Psoas muscle (tissue), 8 donors: ENCODE measurements at regions of chr7 and their contacts with region 1.

Region 1: GRCh38 chr7:55018361-55019190 is at the start of gene EGFR:
- DNase-seq: peak; percentile 80 to 92
- ATAC-seq: peak; percentile 62 to 77 (median 72)
- H3K4me3 ChIP-seq: peak within 1 kb of the TSS; percentile 90
- H3K27ac ChIP-seq: peak within 1 kb of the TSS; percentile 87
- H3K4me1 ChIP-seq: peaks cover 23% of the 10 kb centered on the region
- H3K27me3 ChIP-seq: no peaks in the 10 kb centered on the region
- CTCF ChIP-seq: no peak
- total RNA-seq, gene EGFR: 14.1 to 39.7 (median 22.1) TPM

Region 2: DNA sequence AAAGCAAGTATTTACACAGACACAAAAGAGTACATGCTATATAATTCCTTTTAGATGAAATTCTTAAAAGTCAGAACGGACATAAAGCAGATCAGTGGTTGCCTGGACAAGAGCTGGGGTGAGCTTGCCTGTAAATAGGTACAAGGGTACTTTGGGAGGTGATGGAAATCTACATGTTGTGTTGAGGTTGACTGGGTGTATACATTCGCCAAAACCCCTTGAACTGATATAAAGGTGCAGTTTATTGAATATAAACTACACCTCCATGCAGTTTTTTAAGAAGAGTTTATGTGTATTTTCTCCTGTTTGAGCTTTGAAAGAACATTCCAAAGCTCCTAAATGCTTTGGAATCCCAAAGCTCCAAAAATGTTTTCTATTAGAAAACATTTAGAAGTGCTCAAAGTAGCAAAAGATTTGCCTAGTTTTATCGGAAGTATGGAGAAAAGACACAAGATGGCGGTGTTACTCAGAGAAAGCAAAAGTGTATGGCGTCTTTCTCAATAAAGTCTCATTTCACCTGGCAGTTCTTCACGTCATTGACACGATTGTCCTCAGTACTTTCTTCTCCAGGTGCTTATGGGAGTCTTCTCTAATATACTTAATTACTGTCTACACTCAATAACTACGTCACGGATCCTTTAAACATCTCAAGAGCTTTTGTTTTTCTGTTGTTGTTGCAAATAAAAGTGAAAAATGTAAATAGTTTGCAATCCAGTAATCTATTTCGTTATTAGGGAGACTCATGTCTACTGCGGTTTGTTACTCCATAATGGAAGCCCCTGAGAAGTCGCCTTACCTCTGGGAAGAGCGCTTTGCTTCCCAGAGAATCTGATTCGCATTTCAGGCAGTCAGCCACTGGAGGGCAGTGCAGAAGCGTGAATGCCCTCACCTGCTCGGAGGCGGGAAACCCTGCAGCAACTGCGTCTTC is 244.8 kb before region 1 on chr7:
- intact Hi-C with region 1: loop called in 1 of 2 experiments (anchors 10 kb)
- DNase-seq: peak; percentile 78 to 89
- ATAC-seq: peak; percentile 93 to 99 (median 97)
- H3K4me3 ChIP-seq: peak overlapping the region; percentile 62
- H3K27ac ChIP-seq: no peak overlapping the region
- H3K4me1 ChIP-seq: no peaks in the 10 kb centered on the region
- H3K27me3 ChIP-seq: peaks cover 0 to 4% (median 1%) of the 10 kb centered on the region in 3 donors
- CTCF ChIP-seq: peak; percentile 83

Region 3: GRCh38 chr7:54788664-54789063 is 229.9 kb before region 1 on chr7:
- intact Hi-C with region 1: loop called in 1 of 2 experiments (anchors 10 kb)
- DNase-seq: peak in 1 of 2 donors; percentile 25
- ATAC-seq: peak; percentile 87 to 98 (median 97)
- H3K4me3 ChIP-seq: no peak overlapping the region
- H3K27ac ChIP-seq: no peak overlapping the region
- H3K4me1 ChIP-seq: peaks cover 4% of the 10 kb centered on the region
- H3K27me3 ChIP-seq: no peaks in the 10 kb centered on the region
- CTCF ChIP-seq: peak; percentile 74

Region 4: GRCh38 chr7:55073945-55074499 is 55.4 kb after region 1 on chr7:
- intact Hi-C with region 1: loop called in 1 of 2 experiments (anchors 10 kb)
- DNase-seq: peak in 1 of 2 donors; percentile 69
- ATAC-seq: peak; percentile 18 to 49 (median 40)
- H3K4me3 ChIP-seq: peak overlapping the region; percentile 26
- H3K27ac ChIP-seq: peak overlapping the region; percentile 76
- H3K4me1 ChIP-seq: peaks cover 67% of the 10 kb centered on the region
- H3K27me3 ChIP-seq: no peaks in the 10 kb centered on the region
- CTCF ChIP-seq: no peak